T-cell (primary cell): ENCODE measurements at regions of chr5 and their contacts with region 1.

Region 1: GRCh38 chr5:134225618-134226440 is at the start of gene PPP2CA:
- DNase-seq: peak; percentile 96 to 100 (median 99)
- ATAC-seq: peak; percentile 79 to 85 (median 82)
- H3K4me3 ChIP-seq: peak within 1 kb of the TSS; percentile 89 to 94
- H3K4me3 Mint-ChIP-seq: peak within 1 kb of the TSS; percentile 95 to 98 (median 96)
- H3K27ac ChIP-seq: peak within 1 kb of the TSS; percentile 99
- H3K27ac Mint-ChIP-seq: peak within 1 kb of the TSS; percentile 96 to 98
- H3K4me1 ChIP-seq: peaks cover 24 to 27% of the 10 kb centered on the region in 2 experiments
- H3K4me1 Mint-ChIP-seq: peaks cover 46 to 57% (median 55%) of the 10 kb centered on the region in 3 donors
- H3K27me3 ChIP-seq: no peaks in the 10 kb centered on the region
- H3K27me3 Mint-ChIP-seq: no peaks in the 10 kb centered on the region
- total RNA-seq, gene PPP2CA: 87.1 to 168 (median 104) TPM

Region 2: GRCh38 chr5:134140530-134141201 is 85.2 kb before region 1 on chr5:
- CTCF ChIA-PET with region 1: no interaction called
- POLR2A ChIA-PET with region 1: interaction called in 1 of 2 experiments, 10 read pairs
- DNase-seq: peak in 29 of 35 experiments; percentile 36 to 80 (median 53)
- ATAC-seq: peak; percentile 31 to 43 (median 37)
- H3K4me3 ChIP-seq: no peak overlapping the region
- H3K4me3 Mint-ChIP-seq: peak overlapping the region in 1 of 3 donors; percentile 23
- H3K27ac ChIP-seq: peak overlapping the region; percentile 95
- H3K27ac Mint-ChIP-seq: peak overlapping the region; percentile 92 to 97
- H3K4me1 ChIP-seq: peaks cover 28 to 76% of the 10 kb centered on the region in 2 experiments
- H3K4me1 Mint-ChIP-seq: peaks cover 71 to 83% (median 74%) of the 10 kb centered on the region in 3 donors
- H3K27me3 ChIP-seq: no peaks in the 10 kb centered on the region
- H3K27me3 Mint-ChIP-seq: no peaks in the 10 kb centered on the region

Region 3: DNA sequence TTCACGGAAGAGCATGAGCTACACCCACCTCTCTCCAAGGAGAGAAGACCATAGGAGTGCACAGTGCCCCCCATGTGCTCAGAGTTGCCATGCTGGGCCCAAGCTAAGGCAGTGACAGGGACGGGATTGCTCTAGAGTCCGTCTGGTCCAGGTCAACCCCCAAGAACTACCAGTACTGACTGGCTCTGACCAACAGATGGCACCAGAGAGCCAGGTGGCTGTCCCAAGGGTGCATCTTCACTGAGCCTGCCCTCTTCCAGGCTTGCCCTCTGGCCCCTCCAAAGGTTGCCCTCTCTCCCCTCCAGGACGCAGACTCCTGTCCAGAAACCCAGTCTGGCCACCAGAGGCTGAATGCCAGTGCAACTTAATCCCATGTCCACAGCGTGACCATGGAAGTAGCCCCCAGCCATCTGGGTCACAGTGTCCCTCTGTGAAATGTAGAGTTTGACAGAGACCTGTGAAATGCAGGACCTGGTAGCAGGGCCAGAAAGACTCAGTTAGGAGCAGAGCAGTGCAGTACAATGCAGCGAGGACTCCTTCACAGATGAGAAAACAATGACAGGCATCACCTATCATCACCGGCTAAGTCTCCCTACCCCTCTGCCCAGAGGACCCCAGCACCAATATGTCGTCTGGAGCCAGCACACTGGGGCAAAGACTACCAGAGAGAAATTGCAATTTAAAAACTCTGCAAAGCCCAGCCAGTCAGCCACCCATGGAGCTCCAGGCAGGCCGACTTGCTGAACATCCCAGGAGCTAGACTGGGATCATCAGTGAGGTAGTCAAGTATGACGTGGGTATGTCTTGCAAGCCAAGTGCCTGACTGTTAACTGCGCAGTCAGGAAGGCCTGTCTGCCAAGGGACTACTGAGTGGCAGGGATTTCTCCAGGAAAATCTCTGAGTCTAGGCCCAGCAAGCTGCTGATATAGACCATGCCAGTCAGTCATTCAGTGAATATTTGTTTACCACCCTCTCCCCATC is 41.4 kb before region 1 on chr5:
- CTCF ChIA-PET with region 1: interaction called, 9 to 10 read pairs
- POLR2A ChIA-PET with region 1: no interaction called
- DNase-seq: peak; percentile 27 to 88 (median 64)
- ATAC-seq: peak; percentile 78 to 94 (median 93)
- H3K4me3 ChIP-seq: no peak overlapping the region
- H3K4me3 Mint-ChIP-seq: no peak overlapping the region
- H3K27ac ChIP-seq: no peak overlapping the region
- H3K27ac Mint-ChIP-seq: peak overlapping the region in 1 of 2 donors; percentile 22
- H3K4me1 ChIP-seq: peaks cover 0 to 6% of the 10 kb centered on the region in 2 experiments
- H3K4me1 Mint-ChIP-seq: no peaks in the 10 kb centered on the region
- H3K27me3 ChIP-seq: no peaks in the 10 kb centered on the region
- H3K27me3 Mint-ChIP-seq: no peaks in the 10 kb centered on the region

Region 4: GRCh38 chr5:134209477-134210240 is 16.2 kb before region 1 on chr5:
- CTCF ChIA-PET with region 1: interaction called, 7 to 8 read pairs
- POLR2A ChIA-PET with region 1: interaction called, 9 to 13 read pairs
- DNase-seq: no peak
- ATAC-seq: no peak
- H3K4me3 ChIP-seq: no peak overlapping the region
- H3K4me3 Mint-ChIP-seq: peak overlapping the region in 1 of 3 donors; percentile 42
- H3K27ac ChIP-seq: no peak overlapping the region
- H3K27ac Mint-ChIP-seq: peak overlapping the region in 1 of 2 donors; percentile 22
- H3K4me1 ChIP-seq: peaks cover 5 to 36% of the 10 kb centered on the region in 2 experiments
- H3K4me1 Mint-ChIP-seq: peaks cover 64 to 71% (median 68%) of the 10 kb centered on the region in 3 donors
- H3K27me3 ChIP-seq: no peaks in the 10 kb centered on the region
- H3K27me3 Mint-ChIP-seq: no peaks in the 10 kb centered on the region

Region 5: GRCh38 chr5:134275822-134276221 is 50.0 kb after region 1 on chr5:
- CTCF ChIA-PET with region 1: interaction called in 1 of 2 experiments, 4 read pairs
- POLR2A ChIA-PET with region 1: interaction called in 1 of 2 experiments, 11 read pairs
- DNase-seq: no peak
- ATAC-seq: no peak
- H3K4me3 ChIP-seq: no peak overlapping the region
- H3K4me3 Mint-ChIP-seq: no peak overlapping the region
- H3K27ac ChIP-seq: no peak overlapping the region
- H3K27ac Mint-ChIP-seq: no peak overlapping the region
- H3K4me1 ChIP-seq: peaks cover 0 to 9% of the 10 kb centered on the region in 2 experiments
- H3K4me1 Mint-ChIP-seq: peaks cover 0 to 5% (median 5%) of the 10 kb centered on the region in 3 donors
- H3K27me3 ChIP-seq: peaks cover 0 to 13% of the 10 kb centered on the region in 2 experiments
- H3K27me3 Mint-ChIP-seq: peaks cover under 1 to 8% of the 10 kb centered on the region in 2 donors

Region 6: GRCh38 chr5:134519989-134520388 is 294.2 kb after region 1 on chr5:
- CTCF ChIA-PET with region 1: no interaction called
- POLR2A ChIA-PET with region 1: interaction called in 1 of 2 experiments, 11 read pairs
- DNase-seq: no peak
- ATAC-seq: no peak
- H3K4me3 ChIP-seq: no peak overlapping the region
- H3K4me3 Mint-ChIP-seq: no peak overlapping the region
- H3K27ac ChIP-seq: no peak overlapping the region
- H3K27ac Mint-ChIP-seq: no peak overlapping the region
- H3K4me1 ChIP-seq: peaks cover 10 to 11% of the 10 kb centered on the region in 2 experiments
- H3K4me1 Mint-ChIP-seq: peaks cover 9 to 12% (median 11%) of the 10 kb centered on the region in 3 donors
- H3K27me3 ChIP-seq: no peaks in the 10 kb centered on the region
- H3K27me3 Mint-ChIP-seq: no peaks in the 10 kb centered on the region

Region 7: GRCh38 chr5:134586866-134587524 is 361.2 kb after region 1 on chr5:
- CTCF ChIA-PET with region 1: interaction called in 1 of 2 experiments, 12 read pairs
- POLR2A ChIA-PET with region 1: interaction called in 1 of 2 experiments, 4 read pairs
- DNase-seq: peak; percentile 52 to 86 (median 75)
- ATAC-seq: peak; percentile 87 to 90 (median 88)
- H3K4me3 ChIP-seq: no peak overlapping the region
- H3K4me3 Mint-ChIP-seq: peak overlapping the region in 2 of 3 donors; percentile 6 to 39
- H3K27ac ChIP-seq: no peak overlapping the region
- H3K27ac Mint-ChIP-seq: peak overlapping the region in 1 of 2 donors; percentile 49
- H3K4me1 ChIP-seq: peaks cover 0 to 11% of the 10 kb centered on the region in 2 experiments
- H3K4me1 Mint-ChIP-seq: peaks cover 8 to 9% (median 9%) of the 10 kb centered on the region in 3 donors
- H3K27me3 ChIP-seq: peaks cover 0 to 4% of the 10 kb centered on the region in 2 experiments
- H3K27me3 Mint-ChIP-seq: no peaks in the 10 kb centered on the region